Activated CD8-positive, alpha-beta memory T cell treated with anti-CD3 and anti-CD28 coated beads, Interleukin-2, amount 10 ng/mL, durations not matched to agents 7 days and 5 days (primary cell): ENCODE measurements at regions of chr5 and their contacts with region 1.

Region 1: GRCh38 chr5:149667084-149667828 is 62.9 kb upstream of the PPARGC1B start:
- DNase-seq: peak; percentile 41
- ATAC-seq: peak; percentile 36
- H3K4me3 Mint-ChIP-seq: no peak overlapping the region
- H3K27ac Mint-ChIP-seq: no peak overlapping the region
- H3K4me1 Mint-ChIP-seq: peaks cover 2% of the 10 kb centered on the region
- H3K27me3 Mint-ChIP-seq: peaks cover 7% of the 10 kb centered on the region

Region 2: DNA sequence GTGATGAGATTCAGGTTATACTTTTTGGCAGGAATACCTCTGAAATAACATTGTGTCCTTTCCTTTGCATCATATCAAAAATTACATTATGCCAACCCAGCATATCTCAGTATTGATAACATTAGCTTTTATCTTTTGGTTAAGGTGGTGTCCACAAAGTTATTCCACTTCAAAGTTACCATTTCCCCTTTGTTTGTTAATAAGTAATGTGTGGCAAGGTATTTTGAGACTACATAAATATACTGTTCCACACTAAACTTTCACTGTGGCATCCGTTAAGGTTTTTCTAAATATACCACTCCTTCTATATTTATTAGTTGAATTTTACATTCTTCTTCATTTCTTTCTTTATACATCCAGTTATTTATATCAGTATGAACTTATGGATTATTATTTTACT is 100.0 kb before region 1 on chr5:
- CTCF ChIA-PET with region 1: no interaction called
- DNase-seq: no peak
- ATAC-seq: no peak
- H3K4me3 Mint-ChIP-seq: no peak overlapping the region
- H3K27ac Mint-ChIP-seq: no peak overlapping the region
- H3K4me1 Mint-ChIP-seq: no peaks in the 10 kb centered on the region
- H3K27me3 Mint-ChIP-seq: no peaks in the 10 kb centered on the region

Region 3: GRCh38 chr5:149636851-149637246 is 30.4 kb before region 1 on chr5:
- CTCF ChIA-PET with region 1: interaction called, 13 read pairs
- DNase-seq: peak; percentile 73
- ATAC-seq: peak; percentile 66
- H3K4me3 Mint-ChIP-seq: no peak overlapping the region
- H3K27ac Mint-ChIP-seq: no peak overlapping the region
- H3K4me1 Mint-ChIP-seq: peaks cover 13% of the 10 kb centered on the region
- H3K27me3 Mint-ChIP-seq: no peaks in the 10 kb centered on the region

Region 4: DNA sequence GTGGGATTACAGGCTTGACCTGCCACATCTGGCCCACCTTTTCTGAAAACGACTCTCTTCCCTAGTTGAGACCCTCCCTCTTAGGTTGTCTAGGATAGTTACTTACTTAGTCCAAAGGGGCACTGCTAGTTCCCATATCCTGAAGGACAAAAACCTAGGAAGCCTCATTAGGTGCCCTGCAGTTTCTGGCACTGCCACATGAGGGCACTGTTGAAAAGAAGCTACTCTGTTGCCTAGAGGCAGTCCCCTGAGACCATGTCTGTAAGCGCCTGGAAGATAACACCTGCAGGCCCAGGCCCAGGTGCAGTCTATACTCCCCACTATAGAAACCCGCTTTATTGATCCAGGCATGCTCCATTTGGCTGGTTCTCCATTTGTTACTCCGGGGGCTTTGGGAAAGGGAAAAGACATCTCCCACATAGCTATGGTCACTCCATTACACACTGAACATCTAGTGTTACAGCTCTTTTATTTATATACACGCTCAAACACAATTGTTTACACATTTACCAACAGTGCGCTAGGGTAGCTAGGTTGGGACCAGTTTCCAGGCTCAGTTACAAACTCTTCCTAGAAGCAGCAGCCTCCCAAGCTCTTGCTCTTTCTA is 10.6 kb before region 1 on chr5:
- CTCF ChIA-PET with region 1: interaction called, 20 read pairs
- DNase-seq: peak; percentile 50
- ATAC-seq: no peak
- H3K4me3 Mint-ChIP-seq: no peak overlapping the region
- H3K27ac Mint-ChIP-seq: peak overlapping the region; percentile 26
- H3K4me1 Mint-ChIP-seq: no peaks in the 10 kb centered on the region
- H3K27me3 Mint-ChIP-seq: peaks cover 11% of the 10 kb centered on the region

Region 5: GRCh38 chr5:149723370-149723769 is 56.1 kb after region 1 on chr5:
- CTCF ChIA-PET with region 1: interaction called, 13 read pairs
- DNase-seq: no peak
- ATAC-seq: no peak
- H3K4me3 Mint-ChIP-seq: no peak overlapping the region
- H3K27ac Mint-ChIP-seq: no peak overlapping the region
- H3K4me1 Mint-ChIP-seq: peaks cover 14% of the 10 kb centered on the region
- H3K27me3 Mint-ChIP-seq: peaks cover 11% of the 10 kb centered on the region